HepG2 (cell line): ENCODE measurements at regions of chr12 and their contacts with region 1.

Region 1: GRCh38 chr12:42023733-42024494 is 120.8 kb downstream of the GXYLT1 start:
- DNase-seq: peak; percentile 56
- ATAC-seq: peak; percentile 98
- H3K4me3 ChIP-seq: peak overlapping the region in 1 of 3 experiments; percentile 42; a peak in 1 of 6 replicates
- H3K27ac ChIP-seq: no peak overlapping the region
- H3K4me1 ChIP-seq: no peaks in the 10 kb centered on the region
- H3K27me3 ChIP-seq: peaks cover 0 to 5% of the 10 kb centered on the region in 2 experiments; a peak in 1 of 5 replicates
- CTCF ChIP-seq: peak; percentile 94
- EP300 ChIP-seq: no peak
- POLR2A ChIP-seq: no peak
- RAD21 ChIP-seq: peak; percentile 81

Region 2: GRCh38 chr12:40946612-40947194 is 1077.2 kb before region 1 on chr12:
- CTCF ChIA-PET with region 1: interaction called, 5 read pairs
- POLR2A ChIA-PET with region 1: no interaction called
- in situ Hi-C with region 1: loop called (anchors 25 kb)
- intact Hi-C with region 1: no loop called
- DNase-seq: peak; percentile 4
- ATAC-seq: no peak
- H3K4me3 ChIP-seq: no peak overlapping the region
- H3K27ac ChIP-seq: no peak overlapping the region
- H3K4me1 ChIP-seq: no peaks in the 10 kb centered on the region
- H3K27me3 ChIP-seq: no peaks in the 10 kb centered on the region
- CTCF ChIP-seq: peak; percentile 47
- EP300 ChIP-seq: no peak
- POLR2A ChIP-seq: no peak
- RAD21 ChIP-seq: no peak

Region 3: GRCh38 chr12:41264281-41264680 is 759.6 kb before region 1 on chr12:
- CTCF ChIA-PET with region 1: no interaction called
- POLR2A ChIA-PET with region 1: no interaction called
- in situ Hi-C with region 1: no loop called
- intact Hi-C with region 1: loop called (anchors 1 kb)
- DNase-seq: peak; percentile 3
- ATAC-seq: no peak
- H3K4me3 ChIP-seq: no peak overlapping the region
- H3K27ac ChIP-seq: no peak overlapping the region
- H3K4me1 ChIP-seq: no peaks in the 10 kb centered on the region
- H3K27me3 ChIP-seq: no peaks in the 10 kb centered on the region
- CTCF ChIP-seq: no peak
- EP300 ChIP-seq: no peak
- POLR2A ChIP-seq: no peak
- RAD21 ChIP-seq: no peak

Region 4: DNA sequence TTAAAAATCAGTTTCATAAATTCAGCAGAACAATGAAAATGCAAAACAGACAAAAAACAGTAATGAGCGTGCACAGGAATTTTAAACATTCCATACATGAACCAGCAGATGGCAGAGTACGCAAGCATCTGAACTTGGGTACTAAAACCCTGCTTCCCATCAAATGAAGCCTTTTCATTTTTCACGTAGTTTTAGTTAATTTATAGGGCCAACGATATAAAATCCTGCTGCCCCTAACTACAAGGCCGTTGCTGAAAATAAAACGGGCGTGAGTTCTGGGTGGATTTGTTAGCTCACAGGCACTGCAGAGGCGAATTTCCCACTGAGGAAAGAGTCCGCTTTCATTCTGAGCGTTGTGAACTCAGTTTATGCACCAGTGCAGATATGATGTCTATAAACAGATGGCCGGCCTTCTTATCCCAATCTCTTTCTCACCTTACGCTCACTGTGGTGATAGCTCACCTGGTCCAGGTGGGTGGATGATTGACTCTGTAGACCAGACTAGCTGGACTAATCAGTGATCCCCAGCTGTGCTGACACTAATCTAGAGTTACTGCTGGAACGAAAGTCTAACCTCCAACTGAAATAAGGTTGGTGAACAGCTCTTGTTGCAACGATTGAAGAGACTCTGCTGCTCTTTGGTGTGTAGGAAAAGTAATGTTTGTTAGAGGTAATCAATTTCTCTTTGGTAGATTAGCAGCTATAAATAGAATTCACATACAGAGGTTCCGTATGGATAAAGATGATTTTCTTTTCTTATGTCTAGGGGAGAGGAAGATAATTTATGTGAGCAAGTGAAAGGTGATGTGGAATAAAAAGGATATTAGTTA is 746.6 kb before region 1 on chr12:
- CTCF ChIA-PET with region 1: interaction called, 22 read pairs
- POLR2A ChIA-PET with region 1: no interaction called
- in situ Hi-C with region 1: loop called (anchors 5 kb)
- intact Hi-C with region 1: no loop called
- DNase-seq: peak; percentile 26
- ATAC-seq: peak; percentile 54; the same call in 2 of the 3 replicates
- H3K4me3 ChIP-seq: no peak overlapping the region
- H3K27ac ChIP-seq: no peak overlapping the region
- H3K4me1 ChIP-seq: no peaks in the 10 kb centered on the region
- H3K27me3 ChIP-seq: no peaks in the 10 kb centered on the region
- CTCF ChIP-seq: peak; percentile 75
- EP300 ChIP-seq: no peak
- POLR2A ChIP-seq: no peak
- RAD21 ChIP-seq: peak; percentile 54; the same call in 1 of the 2 replicates

Region 5: GRCh38 chr12:41684997-41685396 is 338.9 kb before region 1 on chr12:
- CTCF ChIA-PET with region 1: interaction called, 3 read pairs
- POLR2A ChIA-PET with region 1: no interaction called
- in situ Hi-C with region 1: no loop called
- intact Hi-C with region 1: loop called (anchors 1 kb)
- DNase-seq: no peak
- ATAC-seq: 0 out of 3 replicates have a peak, but pooled peaks have one; percentile 30
- H3K4me3 ChIP-seq: no peak overlapping the region
- H3K27ac ChIP-seq: no peak overlapping the region
- H3K4me1 ChIP-seq: no peaks in the 10 kb centered on the region
- H3K27me3 ChIP-seq: 0 out of 5 replicates have a peak, but pooled peaks cover 0 to 1% of the 10 kb centered on the region in 2 experiments
- CTCF ChIP-seq: peak; percentile 34
- EP300 ChIP-seq: no peak
- POLR2A ChIP-seq: no peak
- RAD21 ChIP-seq: no peak

Region 6: DNA sequence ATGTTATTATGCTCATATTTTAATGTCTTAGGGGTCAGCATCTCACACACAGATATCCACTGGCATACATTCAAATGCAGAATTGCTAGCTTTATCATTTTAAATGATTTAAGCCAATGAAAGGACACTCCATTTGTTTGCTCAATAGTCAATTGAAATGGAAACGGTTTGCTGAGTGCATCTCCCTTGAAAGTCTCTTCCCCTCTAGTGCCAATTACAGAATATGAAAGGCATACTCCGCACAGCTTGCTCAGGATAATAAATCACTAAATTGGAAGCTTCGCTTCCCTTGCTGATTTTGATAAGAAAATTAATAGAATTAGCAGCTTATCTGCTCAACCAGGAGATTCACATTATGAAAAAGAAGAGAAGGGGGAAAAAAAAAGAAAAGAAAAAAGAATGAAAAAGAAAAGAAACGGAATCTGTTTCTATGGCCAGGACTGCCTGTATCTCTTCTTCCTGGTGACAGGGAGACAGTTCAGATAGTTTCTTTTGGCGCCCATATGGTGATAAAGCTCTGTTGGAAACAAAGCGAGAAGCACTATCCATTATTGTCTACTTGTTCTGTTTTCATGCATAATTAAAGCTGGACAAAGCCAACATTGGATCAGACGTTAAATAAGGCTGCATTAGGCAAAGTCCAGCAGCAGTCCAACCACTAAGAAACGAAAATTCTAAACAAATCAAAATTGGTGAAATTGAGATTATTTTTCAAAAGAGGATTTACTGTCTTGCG is 104.2 kb before region 1 on chr12:
- CTCF ChIA-PET with region 1: no interaction called
- POLR2A ChIA-PET with region 1: no interaction called
- in situ Hi-C with region 1: no loop called
- intact Hi-C with region 1: loop called (anchors 10 kb)
- DNase-seq: no peak
- ATAC-seq: no peak
- H3K4me3 ChIP-seq: no peak overlapping the region
- H3K27ac ChIP-seq: no peak overlapping the region
- H3K4me1 ChIP-seq: no peaks in the 10 kb centered on the region
- H3K27me3 ChIP-seq: peaks cover 0 to 5% of the 10 kb centered on the region in 2 experiments; a peak in 1 of 5 replicates
- CTCF ChIP-seq: no peak
- EP300 ChIP-seq: no peak
- POLR2A ChIP-seq: no peak
- RAD21 ChIP-seq: no peak

Region 7: DNA sequence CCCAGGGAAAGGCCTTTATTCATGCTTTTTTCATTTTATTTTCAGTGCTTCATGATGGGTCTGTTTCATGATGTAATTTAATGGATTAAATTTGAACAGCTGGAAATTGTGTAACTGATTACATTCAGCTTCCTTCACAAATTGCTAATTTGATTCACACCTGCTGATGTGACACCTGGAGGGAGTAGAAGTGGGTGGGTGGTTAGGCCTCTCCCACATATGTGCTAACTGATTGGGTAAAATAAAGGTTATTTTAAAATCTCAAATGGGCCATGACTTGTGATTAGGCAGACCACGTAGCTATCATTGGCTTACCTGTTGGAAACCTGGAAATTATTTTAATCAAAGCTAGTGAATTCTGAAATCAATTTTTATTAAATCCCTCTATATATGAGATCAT is 21.4 kb before region 1 on chr12:
- CTCF ChIA-PET with region 1: no interaction called
- POLR2A ChIA-PET with region 1: no interaction called
- in situ Hi-C with region 1: no loop called
- intact Hi-C with region 1: no loop called
- DNase-seq: no peak
- ATAC-seq: no peak
- H3K4me3 ChIP-seq: no peak overlapping the region
- H3K27ac ChIP-seq: no peak overlapping the region
- H3K4me1 ChIP-seq: no peaks in the 10 kb centered on the region
- H3K27me3 ChIP-seq: no peaks in the 10 kb centered on the region; a peak in 1 of 5 replicates
- CTCF ChIP-seq: no peak
- EP300 ChIP-seq: no peak
- POLR2A ChIP-seq: no peak
- RAD21 ChIP-seq: no peak